Panc1 (cell line): ENCODE measurements at regions of chr14 and their contacts with region 1.

Region 1: GRCh38 chr14:103928011-103928890 is at the start of gene TDRD9:
- DNase-seq: no peak
- ATAC-seq: no peak
- H3K4me3 ChIP-seq: no peak within 1 kb of the TSS
- H3K27ac ChIP-seq: no peak within 1 kb of the TSS
- H3K4me1 ChIP-seq: no peaks in the 10 kb centered on the region
- H3K27me3 ChIP-seq: no peaks in the 10 kb centered on the region
- CTCF ChIP-seq: no peak
- total RNA-seq, gene TDRD9: not detected

Region 2: GRCh38 chr14:103581936-103582703 is 346.1 kb before region 1 on chr14:
- CTCF ChIA-PET with region 1: no interaction called
- POLR2A ChIA-PET with region 1: no interaction called
- in situ Hi-C with region 1: no loop called
- intact Hi-C with region 1: no loop called
- DNase-seq: no peak
- ATAC-seq: no peak; the same call in 1 of the 2 replicates
- H3K4me3 ChIP-seq: no peak overlapping the region
- H3K27ac ChIP-seq: no peak overlapping the region
- H3K4me1 ChIP-seq: no peaks in the 10 kb centered on the region
- H3K27me3 ChIP-seq: no peaks in the 10 kb centered on the region
- CTCF ChIP-seq: no peak

Region 3: DNA sequence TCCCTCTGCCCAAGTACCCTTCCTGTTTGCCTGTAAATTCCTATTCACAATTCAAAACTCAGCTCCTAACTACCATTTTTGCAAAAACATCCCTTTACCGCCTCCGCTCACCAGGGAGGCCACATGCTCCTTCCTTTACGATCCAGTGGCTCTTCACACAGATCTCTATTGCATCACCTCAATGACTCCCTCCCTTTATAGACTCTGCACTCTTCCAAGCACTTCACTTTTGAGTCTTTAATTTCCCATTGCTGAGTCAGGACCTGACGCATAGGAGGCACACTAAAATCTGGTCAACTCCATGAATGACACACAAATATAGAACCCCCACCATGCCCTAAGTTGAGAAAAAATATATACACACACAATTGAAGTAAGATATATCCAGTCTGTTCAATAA is 126.8 kb before region 1 on chr14:
- CTCF ChIA-PET with region 1: interaction called, 11 read pairs
- POLR2A ChIA-PET with region 1: no interaction called
- in situ Hi-C with region 1: no loop called
- intact Hi-C with region 1: no loop called
- DNase-seq: no peak
- ATAC-seq: no peak
- H3K4me3 ChIP-seq: no peak overlapping the region
- H3K27ac ChIP-seq: no peak overlapping the region
- H3K4me1 ChIP-seq: no peaks in the 10 kb centered on the region
- H3K27me3 ChIP-seq: no peaks in the 10 kb centered on the region
- CTCF ChIP-seq: no peak